Right cardiac atrium (tissue), 5 donors: ENCODE measurements at regions of chr11 and their contacts with region 1.

Region 1: GRCh38 chr11:96054870-96055705 is 131.2 kb upstream of the MTMR2 start:
- DNase-seq: no peak
- ATAC-seq: peak in 1 of 2 donors; percentile 60
- H3K4me3 ChIP-seq: no peak overlapping the region
- H3K27ac ChIP-seq: no peak overlapping the region
- H3K4me1 ChIP-seq: peaks cover 5% of the 10 kb centered on the region
- H3K27me3 ChIP-seq: no peaks in the 10 kb centered on the region

Region 2: DNA sequence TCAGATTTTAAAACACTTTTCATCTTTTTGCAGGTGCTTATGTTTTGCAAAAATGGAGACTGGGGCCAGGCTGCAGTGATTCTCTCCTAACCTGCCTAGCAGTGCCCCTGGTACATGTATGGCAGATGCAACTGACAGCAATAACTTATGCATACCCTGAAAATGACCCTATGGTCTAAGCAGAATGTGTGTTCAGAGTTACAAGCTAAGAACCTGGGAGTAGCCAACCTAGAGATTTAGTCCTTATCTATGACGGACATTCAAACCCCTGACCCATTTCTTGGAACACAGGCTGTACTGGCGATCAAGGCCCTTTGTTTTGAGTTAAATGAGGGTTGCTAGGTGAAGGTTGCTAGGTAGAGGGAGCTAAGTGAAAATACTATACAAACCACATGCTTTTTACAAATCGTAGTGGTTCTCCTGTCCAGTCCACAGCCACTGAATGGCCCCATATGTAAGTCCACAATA is 639.2 kb before region 1 on chr11:
- intact Hi-C with region 1: no loop called
- DNase-seq: no peak
- ATAC-seq: peak; percentile 31 to 92
- H3K4me3 ChIP-seq: no peak overlapping the region
- H3K27ac ChIP-seq: no peak overlapping the region
- H3K4me1 ChIP-seq: no peaks in the 10 kb centered on the region
- H3K27me3 ChIP-seq: no peaks in the 10 kb centered on the region

Region 3: GRCh38 chr11:96215110-96215782 is 160.2 kb after region 1 on chr11:
- intact Hi-C with region 1: loop called in 1 of 4 experiments (anchors 5 kb)
- DNase-seq: no peak
- ATAC-seq: peak in 1 of 2 donors; percentile 37
- H3K4me3 ChIP-seq: no peak overlapping the region
- H3K27ac ChIP-seq: peak overlapping the region; percentile 79
- H3K4me1 ChIP-seq: peaks cover 17% of the 10 kb centered on the region
- H3K27me3 ChIP-seq: no peaks in the 10 kb centered on the region